B cell (primary cell): ENCODE measurements at regions of chr9 and their contacts with region 1.

Region 1: GRCh38 chr9:68704814-68705530 is at the start of gene PIP5K1B:
- DNase-seq: peak; percentile 90
- ATAC-seq: peak; percentile 88
- H3K4me3 ChIP-seq: peak within 1 kb of the TSS; percentile 78 to 88 (median 83)
- H3K4me3 Mint-ChIP-seq: peak within 1 kb of the TSS; percentile 87
- H3K27ac ChIP-seq: peak within 1 kb of the TSS; percentile 56 to 66
- H3K27ac Mint-ChIP-seq: peak within 1 kb of the TSS; percentile 98
- H3K4me1 ChIP-seq: peaks cover 42 to 43% of the 10 kb centered on the region in 2 donors
- H3K4me1 Mint-ChIP-seq: peaks cover 50% of the 10 kb centered on the region
- H3K27me3 ChIP-seq: no peaks in the 10 kb centered on the region
- H3K27me3 Mint-ChIP-seq: no peaks in the 10 kb centered on the region
- CTCF ChIP-seq: no peak
- total RNA-seq, gene PIP5K1B: 24.1 and 28.2 TPM in 2 replicates

Region 2: GRCh38 chr9:68631811-68632210 is 73.2 kb before region 1 on chr9:
- CTCF ChIA-PET with region 1: no interaction called
- POLR2A ChIA-PET with region 1: no interaction called
- intact Hi-C with region 1: no loop called
- DNase-seq: no peak
- ATAC-seq: no peak
- H3K4me3 ChIP-seq: no peak overlapping the region
- H3K4me3 Mint-ChIP-seq: no peak overlapping the region
- H3K27ac ChIP-seq: no peak overlapping the region
- H3K27ac Mint-ChIP-seq: no peak overlapping the region
- H3K4me1 ChIP-seq: peaks cover 24 to 25% of the 10 kb centered on the region in 2 donors
- H3K4me1 Mint-ChIP-seq: peaks cover 27% of the 10 kb centered on the region
- H3K27me3 ChIP-seq: no peaks in the 10 kb centered on the region
- H3K27me3 Mint-ChIP-seq: no peaks in the 10 kb centered on the region
- CTCF ChIP-seq: no peak

Region 3: GRCh38 chr9:68685770-68686169 is 19.2 kb before region 1 on chr9:
- CTCF ChIA-PET with region 1: interaction called, 21 read pairs
- POLR2A ChIA-PET with region 1: no interaction called
- intact Hi-C with region 1: loop called (anchors 2 kb)
- DNase-seq: peak; percentile 73
- ATAC-seq: peak; percentile 93
- H3K4me3 ChIP-seq: no peak overlapping the region
- H3K4me3 Mint-ChIP-seq: no peak overlapping the region
- H3K27ac ChIP-seq: no peak overlapping the region
- H3K27ac Mint-ChIP-seq: no peak overlapping the region
- H3K4me1 ChIP-seq: peaks cover 32 to 40% of the 10 kb centered on the region in 2 donors
- H3K4me1 Mint-ChIP-seq: peaks cover 27% of the 10 kb centered on the region
- H3K27me3 ChIP-seq: peaks cover 0 to 5% (median 0%) of the 10 kb centered on the region in 4 experiments
- H3K27me3 Mint-ChIP-seq: no peaks in the 10 kb centered on the region
- CTCF ChIP-seq: peak; percentile 74

Region 4: GRCh38 chr9:68728731-68729130 is 23.8 kb after region 1 on chr9:
- CTCF ChIA-PET with region 1: no interaction called
- POLR2A ChIA-PET with region 1: no interaction called
- intact Hi-C with region 1: no loop called
- DNase-seq: no peak
- ATAC-seq: no peak
- H3K4me3 ChIP-seq: no peak overlapping the region
- H3K4me3 Mint-ChIP-seq: no peak overlapping the region
- H3K27ac ChIP-seq: no peak overlapping the region
- H3K27ac Mint-ChIP-seq: no peak overlapping the region
- H3K4me1 ChIP-seq: no peaks in the 10 kb centered on the region
- H3K4me1 Mint-ChIP-seq: peaks cover 22% of the 10 kb centered on the region
- H3K27me3 ChIP-seq: no peaks in the 10 kb centered on the region
- H3K27me3 Mint-ChIP-seq: no peaks in the 10 kb centered on the region
- CTCF ChIP-seq: no peak

Region 5: DNA sequence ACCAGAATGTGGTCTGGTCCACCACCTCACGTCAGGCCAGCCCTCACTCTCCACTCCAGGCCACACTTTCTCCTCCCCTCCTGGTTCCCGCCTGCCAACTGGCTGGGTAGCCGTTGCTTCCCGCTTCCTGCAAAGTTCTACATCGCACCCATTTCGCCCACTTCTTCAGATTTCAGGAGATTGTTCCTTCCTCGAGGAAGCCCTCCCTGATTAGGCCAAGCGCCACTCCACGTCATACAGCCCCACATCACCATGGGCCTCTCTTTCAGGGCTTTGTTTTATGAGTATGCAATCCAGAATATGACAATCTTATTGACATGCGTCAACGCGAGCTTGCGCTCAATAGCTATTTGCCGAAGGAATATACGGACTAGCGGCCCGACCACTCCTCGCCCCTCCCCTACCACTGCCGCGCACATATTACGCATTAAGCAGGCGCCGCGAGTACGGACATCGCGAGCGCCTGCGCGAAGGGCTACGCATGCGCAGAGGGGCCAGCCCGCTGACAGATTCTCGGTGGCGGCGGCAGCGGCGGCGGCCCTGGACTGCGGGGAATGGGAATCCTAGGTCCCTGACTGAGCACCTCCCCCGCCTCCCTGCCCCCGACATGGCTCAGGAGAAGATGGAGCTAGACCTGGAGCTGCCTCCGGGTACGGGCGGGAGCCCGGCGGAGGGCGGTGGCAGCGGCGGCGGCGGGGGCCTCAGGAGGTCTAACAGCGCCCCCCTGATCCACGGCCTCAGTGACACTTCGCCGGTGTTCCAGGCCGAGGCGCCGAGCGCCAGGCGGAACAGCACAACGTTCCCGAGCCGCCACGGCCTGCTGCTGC is 74.8 kb after region 1 on chr9:
- CTCF ChIA-PET with region 1: interaction called, 6 read pairs
- POLR2A ChIA-PET with region 1: interaction called, 4 read pairs
- intact Hi-C with region 1: loop called (anchors 1 kb)
- DNase-seq: peak; percentile 98
- ATAC-seq: peak; percentile 91
- H3K4me3 ChIP-seq: peak overlapping the region; percentile 61 to 92 (median 87)
- H3K4me3 Mint-ChIP-seq: no peak overlapping the region
- H3K27ac ChIP-seq: peak overlapping the region; percentile 91 to 95
- H3K27ac Mint-ChIP-seq: no peak overlapping the region
- H3K4me1 ChIP-seq: peaks cover 29 to 43% of the 10 kb centered on the region in 2 donors
- H3K4me1 Mint-ChIP-seq: peaks cover 9% of the 10 kb centered on the region
- H3K27me3 ChIP-seq: no peaks in the 10 kb centered on the region
- H3K27me3 Mint-ChIP-seq: no peaks in the 10 kb centered on the region
- CTCF ChIP-seq: peak; percentile 66

Region 6: GRCh38 chr9:68895741-68896478 is 190.9 kb after region 1 on chr9:
- CTCF ChIA-PET with region 1: no interaction called
- POLR2A ChIA-PET with region 1: no interaction called
- intact Hi-C with region 1: loop called (anchors 5 kb)
- DNase-seq: peak; percentile 37
- ATAC-seq: peak; percentile 93
- H3K4me3 ChIP-seq: peak overlapping the region in 3 of 5 experiments; percentile 3 to 55 (median 28)
- H3K4me3 Mint-ChIP-seq: peak overlapping the region; percentile 74
- H3K27ac ChIP-seq: peak overlapping the region; percentile 39 to 68
- H3K27ac Mint-ChIP-seq: peak overlapping the region; percentile 86
- H3K4me1 ChIP-seq: peaks cover 31 to 39% of the 10 kb centered on the region in 2 donors
- H3K4me1 Mint-ChIP-seq: peaks cover 60% of the 10 kb centered on the region
- H3K27me3 ChIP-seq: no peaks in the 10 kb centered on the region
- H3K27me3 Mint-ChIP-seq: no peaks in the 10 kb centered on the region
- CTCF ChIP-seq: no peak

Region 7: DNA sequence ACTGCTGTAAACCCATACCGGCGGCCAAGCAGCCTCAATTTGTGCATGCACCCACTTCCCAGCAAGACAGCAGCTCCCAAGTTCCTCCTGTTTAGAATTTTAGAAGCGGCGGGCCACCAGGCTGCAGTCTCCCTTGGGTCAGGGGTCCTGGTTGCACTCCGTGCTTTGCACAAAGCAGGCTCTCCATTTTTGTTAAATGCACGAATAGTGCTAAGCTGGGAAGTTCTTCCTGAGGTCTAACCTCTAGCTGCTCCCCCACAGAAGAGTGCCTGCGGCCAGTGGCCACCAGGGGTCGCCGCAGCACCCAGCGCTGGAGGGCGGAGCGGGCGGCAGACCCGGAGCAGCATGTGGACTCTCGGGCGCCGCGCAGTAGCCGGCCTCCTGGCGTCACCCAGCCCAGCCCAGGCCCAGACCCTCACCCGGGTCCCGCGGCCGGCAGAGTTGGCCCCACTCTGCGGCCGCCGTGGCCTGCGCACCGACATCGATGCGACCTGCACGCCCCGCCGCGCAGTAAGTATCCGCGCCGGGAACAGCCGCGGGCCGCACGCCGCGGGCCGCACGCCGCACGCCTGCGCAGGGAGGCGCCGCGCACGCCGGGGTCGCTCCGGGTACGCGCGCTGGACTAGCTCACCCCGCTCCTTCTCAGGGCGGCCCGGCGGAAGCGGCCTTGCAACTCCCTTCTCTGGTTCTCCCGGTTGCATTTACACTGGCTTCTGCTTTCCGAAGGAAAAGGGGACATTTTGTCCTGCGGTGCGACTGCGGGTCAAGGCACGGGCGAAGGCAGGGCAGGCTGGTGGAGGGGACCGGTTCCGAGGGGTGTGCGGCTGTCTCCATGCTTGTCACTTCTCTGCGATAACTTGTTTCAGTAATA is 330.7 kb after region 1 on chr9 and contains the start of gene FXN:
- CTCF ChIA-PET with region 1: no interaction called
- POLR2A ChIA-PET with region 1: no interaction called
- intact Hi-C with region 1: loop called (anchors 5 kb)
- DNase-seq: peak; percentile 88
- ATAC-seq: peak; percentile 90
- H3K4me3 ChIP-seq: peak within 1 kb of the TSS; percentile 69 to 94 (median 84)
- H3K4me3 Mint-ChIP-seq: peak within 1 kb of the TSS; percentile 99
- H3K27ac ChIP-seq: peak within 1 kb of the TSS; percentile 12 to 28
- H3K27ac Mint-ChIP-seq: peak within 1 kb of the TSS; percentile 93
- H3K4me1 ChIP-seq: peaks cover 8 to 11% of the 10 kb centered on the region in 2 donors
- H3K4me1 Mint-ChIP-seq: peaks cover 11% of the 10 kb centered on the region
- H3K27me3 ChIP-seq: no peaks in the 10 kb centered on the region
- H3K27me3 Mint-ChIP-seq: no peaks in the 10 kb centered on the region
- CTCF ChIP-seq: peak; percentile 93
- total RNA-seq, gene FXN: 8.0 and 8.8 TPM in 2 replicates